Left ventricle myocardium superior (tissue), 1 donor: ENCODE measurements at regions of chr2 and their contacts with region 1.

Region 1: DNA sequence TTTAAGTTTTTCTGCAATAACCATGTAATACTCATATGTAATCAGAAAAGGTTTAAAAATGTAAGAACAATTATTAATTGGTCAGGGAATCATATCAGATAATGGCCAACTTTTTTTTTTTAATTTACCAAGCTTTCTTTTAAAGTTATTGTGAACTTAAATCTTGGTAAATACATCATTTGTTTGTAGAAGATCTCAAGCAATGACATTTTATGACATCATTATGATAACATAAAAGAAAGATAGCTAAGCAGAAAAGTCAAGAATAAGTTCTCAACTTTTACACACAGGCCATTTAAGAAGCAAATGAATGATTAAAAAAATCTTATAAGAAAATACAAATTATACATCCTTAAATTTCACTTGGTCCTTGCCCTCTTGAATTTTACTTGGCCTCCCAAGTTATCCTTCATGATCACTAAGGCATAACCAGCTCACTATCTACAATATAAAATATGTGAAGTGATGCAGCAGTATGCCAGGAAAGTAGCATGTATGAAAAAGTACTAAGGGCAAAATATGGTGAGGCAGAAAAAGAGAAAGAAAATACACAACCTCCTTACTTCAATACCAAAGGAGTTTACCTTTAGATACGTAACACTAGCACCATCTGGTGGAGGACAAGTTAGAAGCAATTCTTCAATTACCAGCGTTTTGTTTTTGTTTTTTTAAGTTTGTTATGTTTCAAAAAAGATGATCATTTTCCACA is 116.6 kb downstream of the SRBD1 start:
- DNase-seq: no peak
- ATAC-seq: no peak

Region 2: DNA sequence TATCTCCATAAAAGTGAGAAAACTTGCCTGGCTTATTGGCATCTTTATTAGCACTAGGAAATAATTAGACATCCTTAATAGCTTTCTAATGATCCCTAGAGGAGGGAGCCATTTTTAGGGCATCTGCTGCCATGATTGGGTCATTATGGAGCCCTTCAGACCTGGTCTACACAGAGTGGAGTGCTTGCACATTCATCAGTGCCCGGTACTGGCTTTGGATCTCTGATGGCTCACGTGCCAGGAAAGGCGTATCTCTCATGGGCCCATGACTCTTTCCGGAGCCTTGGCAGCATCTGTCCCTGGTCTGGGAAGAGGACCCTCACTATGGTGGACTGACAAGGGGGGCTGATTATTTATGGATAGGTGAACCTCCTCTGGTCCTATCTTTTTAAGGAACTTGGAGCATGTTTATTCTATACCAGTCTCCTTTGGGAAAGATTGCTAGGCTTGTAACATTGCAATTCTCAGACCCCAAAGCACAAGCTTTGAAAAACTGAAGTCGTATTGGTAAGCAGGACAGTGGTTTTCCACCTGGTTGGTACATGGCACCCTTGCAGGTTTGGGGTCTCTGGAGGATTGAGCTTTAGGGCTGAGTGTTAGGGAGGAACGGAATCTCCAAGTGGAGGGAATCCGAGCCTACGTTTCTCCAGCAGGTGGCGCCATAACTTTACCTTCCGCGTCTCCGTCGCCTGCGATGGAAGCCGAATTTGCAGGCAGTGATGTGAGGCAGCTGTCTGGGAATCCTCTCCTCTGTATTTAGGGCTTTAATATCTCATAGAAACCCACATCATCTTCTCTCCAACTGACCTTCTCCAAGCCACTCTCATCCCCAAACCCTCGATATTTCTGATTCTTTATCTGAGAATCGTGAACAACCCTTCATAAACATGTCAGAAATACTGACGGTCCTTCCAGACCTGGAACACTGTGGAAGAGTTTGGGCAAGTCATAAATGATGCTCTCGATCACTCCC is 513.0 kb before region 1 on chr2:
- intact Hi-C with region 1: loop called (anchors 2 kb)
- DNase-seq: peak; percentile 81
- ATAC-seq: peak; percentile 86

Region 3: GRCh38 chr2:45541450-45541849 is 47.0 kb after region 1 on chr2:
- intact Hi-C with region 1: no loop called
- DNase-seq: no peak
- ATAC-seq: no peak